ENCODE measurements at regions of chr3 and their contacts with region 1.

Region 1: DNA sequence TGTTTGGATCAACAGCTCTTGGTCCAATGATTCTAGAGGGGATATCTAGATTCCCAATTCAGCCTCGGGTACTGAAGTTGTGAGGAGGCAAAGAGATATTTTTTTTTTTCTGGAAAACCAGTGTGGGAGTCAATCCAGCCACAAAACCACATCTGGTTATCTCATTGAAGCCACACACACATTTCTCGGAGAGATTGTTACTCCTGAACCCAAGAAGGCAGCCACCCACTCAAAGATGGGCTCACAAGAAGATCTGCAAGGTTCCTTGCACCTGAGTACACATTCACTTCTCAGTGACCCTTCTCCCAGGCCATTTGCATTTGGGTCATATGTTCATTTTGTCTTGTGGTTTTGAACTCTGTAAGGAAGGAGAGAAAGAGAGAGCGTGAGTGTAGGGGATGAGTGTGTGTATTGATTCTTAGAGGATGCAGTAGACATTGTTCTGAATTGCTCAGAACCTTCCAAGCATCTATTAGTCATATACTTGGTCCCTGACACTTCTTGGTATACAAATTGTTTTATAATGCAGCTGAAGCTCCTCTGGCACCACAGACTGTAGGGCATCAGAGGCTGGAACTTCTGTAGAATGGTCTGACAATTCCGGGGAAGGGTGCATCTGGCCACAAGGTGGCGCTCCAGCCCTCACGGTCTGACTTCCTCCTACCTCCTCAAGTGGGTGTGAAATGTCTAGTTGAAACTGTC is 39.3 kb upstream of the TRA2B start:
- DNase-seq: peak; percentile 94
- H3K4me3 Mint-ChIP-seq: peak overlapping the region; percentile 44
- H3K27ac Mint-ChIP-seq: peak overlapping the region; percentile 68
- H3K4me1 Mint-ChIP-seq: peaks cover 16% of the 10 kb centered on the region
- H3K27me3 Mint-ChIP-seq: peaks cover 41% of the 10 kb centered on the region

Region 2: DNA sequence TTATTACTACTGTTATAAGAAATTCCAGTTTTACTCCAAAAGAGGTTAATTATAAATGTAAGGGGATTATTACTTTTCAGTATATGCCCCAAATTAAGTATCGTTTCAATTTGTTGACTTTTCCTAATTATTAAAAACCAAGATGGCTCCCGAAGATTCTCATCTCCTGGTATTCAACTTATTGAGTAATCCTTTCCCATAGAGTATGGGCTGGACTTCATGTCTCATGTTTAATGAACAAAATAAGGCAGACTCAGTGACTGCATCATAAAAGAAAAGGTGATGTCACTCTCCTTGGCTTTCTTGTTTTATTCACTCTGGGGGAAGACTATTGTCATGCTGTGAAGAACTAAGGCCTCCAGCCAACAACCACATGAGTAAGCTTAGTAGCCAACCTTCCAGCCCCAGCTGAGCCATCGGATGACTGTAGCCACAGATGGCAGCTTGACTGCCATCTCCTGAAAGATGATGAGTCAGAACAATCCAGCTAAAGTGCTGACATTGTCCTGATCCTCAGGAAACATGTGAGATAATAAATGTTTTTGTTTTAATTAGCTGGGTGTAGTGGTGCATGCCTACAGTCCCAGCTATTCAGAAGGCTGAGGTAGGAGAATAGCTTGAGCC is 169.6 kb before region 1 on chr3:
- intact Hi-C with region 1: no loop called
- DNase-seq: no peak
- H3K4me3 Mint-ChIP-seq: no peak overlapping the region
- H3K27ac Mint-ChIP-seq: no peak overlapping the region
- H3K4me1 Mint-ChIP-seq: no peaks in the 10 kb centered on the region
- H3K27me3 Mint-ChIP-seq: peaks cover 22% of the 10 kb centered on the region

Region 3: GRCh38 chr3:185937689-185938463 is 39.3 kb before region 1 on chr3 and contains the start of gene TRA2B:
- intact Hi-C with region 1: loop called (anchors 1 kb)
- DNase-seq: peak; percentile 100
- H3K4me3 Mint-ChIP-seq: peak within 1 kb of the TSS; percentile 98
- H3K27ac Mint-ChIP-seq: peak within 1 kb of the TSS; percentile 100
- H3K4me1 Mint-ChIP-seq: peaks cover 33% of the 10 kb centered on the region
- H3K27me3 Mint-ChIP-seq: peaks cover 4% of the 10 kb centered on the region
- total RNA-seq, gene TRA2B: 311 and 314 TPM in 2 replicates

Region 4: GRCh38 chr3:186013312-186013711 is 36.2 kb after region 1 on chr3:
- intact Hi-C with region 1: no loop called
- DNase-seq: no peak
- H3K4me3 Mint-ChIP-seq: no peak overlapping the region
- H3K27ac Mint-ChIP-seq: no peak overlapping the region
- H3K4me1 Mint-ChIP-seq: no peaks in the 10 kb centered on the region
- H3K27me3 Mint-ChIP-seq: peaks cover 10% of the 10 kb centered on the region

Region 5: DNA sequence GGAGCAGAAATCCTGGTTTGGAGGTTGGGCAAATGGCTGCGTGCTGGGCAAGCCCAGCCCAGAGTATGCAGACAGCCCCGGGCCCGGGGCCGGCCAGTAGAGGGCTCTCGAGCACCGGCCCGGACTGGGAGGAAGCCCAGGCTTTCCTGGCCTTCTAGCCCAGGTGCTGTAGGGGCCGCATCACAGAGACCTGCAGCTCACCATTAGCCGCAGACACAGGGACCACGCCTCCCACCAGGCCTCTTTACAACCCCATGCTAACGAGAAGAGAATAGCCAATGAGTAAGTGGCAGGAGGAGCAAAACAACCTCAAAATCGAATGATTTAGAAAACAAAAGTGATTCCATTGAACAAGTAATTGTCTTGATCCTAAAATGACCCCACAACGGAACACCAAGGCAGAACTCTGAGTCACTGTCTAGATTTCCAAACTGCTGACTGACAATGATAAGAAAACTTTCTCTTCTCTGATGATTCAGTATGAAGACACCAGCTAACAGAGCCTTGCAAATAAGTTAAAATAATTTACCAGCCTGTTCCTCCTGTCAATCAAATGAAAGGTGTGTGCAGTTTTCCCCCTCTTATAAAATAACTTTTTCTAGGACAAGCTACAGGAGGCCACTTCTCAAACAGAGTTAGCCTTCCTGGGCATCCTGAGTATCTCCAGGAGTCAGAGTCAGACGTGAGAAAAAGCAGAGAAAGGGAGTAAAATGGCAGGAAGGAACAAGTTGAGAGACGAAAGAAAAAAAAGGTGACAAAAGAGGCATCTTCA is 282.7 kb after region 1 on chr3:
- intact Hi-C with region 1: no loop called
- DNase-seq: peak; percentile 86
- H3K4me3 Mint-ChIP-seq: peak overlapping the region; percentile 46
- H3K27ac Mint-ChIP-seq: peak overlapping the region; percentile 76
- H3K4me1 Mint-ChIP-seq: peaks cover 20% of the 10 kb centered on the region
- H3K27me3 Mint-ChIP-seq: peaks cover 5% of the 10 kb centered on the region

Region 6: GRCh38 chr3:186540221-186540834 is 563.2 kb after region 1 on chr3:
- intact Hi-C with region 1: loop called (anchors 1 kb)
- DNase-seq: peak; percentile 95
- H3K4me3 Mint-ChIP-seq: peak overlapping the region; percentile 28
- H3K27ac Mint-ChIP-seq: peak overlapping the region; percentile 21
- H3K4me1 Mint-ChIP-seq: peaks cover 31% of the 10 kb centered on the region
- H3K27me3 Mint-ChIP-seq: no peaks in the 10 kb centered on the region

Region 7: DNA sequence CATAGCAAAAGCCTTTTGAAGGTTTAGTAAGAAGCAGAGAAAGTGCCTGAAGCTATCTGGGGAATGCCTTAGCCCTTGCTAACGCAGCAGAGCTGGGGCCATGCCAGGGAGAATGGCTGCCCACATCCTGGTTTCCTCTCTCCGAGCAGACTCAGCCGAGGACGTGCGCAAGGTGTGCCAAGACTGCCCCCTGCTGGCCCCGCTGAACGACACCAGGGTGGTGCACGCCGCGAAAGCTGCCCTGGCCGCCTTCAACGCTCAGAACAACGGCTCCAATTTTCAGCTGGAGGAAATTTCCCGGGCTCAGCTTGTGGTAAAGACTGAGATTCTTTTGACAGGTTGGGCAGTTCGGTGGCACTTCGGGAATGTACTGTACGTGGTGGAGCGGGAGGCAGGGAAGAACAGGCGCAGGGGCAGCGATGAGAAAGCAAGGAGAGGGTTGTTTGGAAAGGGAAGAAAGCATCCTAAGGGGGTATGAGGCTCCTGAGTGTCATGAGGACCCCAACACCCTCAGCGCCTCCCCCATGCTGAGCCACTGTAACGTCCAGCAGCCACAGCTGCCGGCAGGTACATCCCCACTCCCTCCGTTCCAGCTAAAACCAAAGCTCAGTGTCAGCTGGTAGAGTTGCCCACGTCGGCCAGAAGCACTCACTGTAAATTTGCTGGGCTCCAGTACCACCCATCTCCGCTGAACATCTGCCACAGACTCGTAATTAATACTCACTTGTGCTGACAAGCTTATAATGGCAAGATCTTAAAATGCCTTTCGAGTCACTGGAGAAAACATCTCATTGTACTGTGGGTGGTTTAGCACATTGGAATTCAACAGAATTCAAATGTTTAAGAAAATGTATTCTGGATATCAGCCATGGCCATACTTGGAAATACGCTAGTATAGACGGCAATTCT is 640.2 kb after region 1 on chr3:
- intact Hi-C with region 1: loop called (anchors 2 kb)
- DNase-seq: peak; percentile 94
- H3K4me3 Mint-ChIP-seq: peak overlapping the region; percentile 74
- H3K27ac Mint-ChIP-seq: peak overlapping the region; percentile 68
- H3K4me1 Mint-ChIP-seq: peaks cover 21% of the 10 kb centered on the region
- H3K27me3 Mint-ChIP-seq: peaks cover 30% of the 10 kb centered on the region

Region 8: GRCh38 chr3:186806089-186807055 is 829.2 kb after region 1 on chr3 and contains the start of gene RFC4:
- intact Hi-C with region 1: loop called (anchors 10 kb)
- DNase-seq: peak; percentile 96
- H3K4me3 Mint-ChIP-seq: peak within 1 kb of the TSS; percentile 93
- H3K27ac Mint-ChIP-seq: peak within 1 kb of the TSS; percentile 91
- H3K4me1 Mint-ChIP-seq: peaks cover 24% of the 10 kb centered on the region
- H3K27me3 Mint-ChIP-seq: no peaks in the 10 kb centered on the region
- total RNA-seq, gene RFC4: 116 and 119 TPM in 2 replicates

Measured in activated CD4-positive, alpha-beta T cell treated with anti-CD3 and anti-CD28 coated beads, Interleukin-2, amount 10 ng/mL, durations not matched to agents 24 days and 14 days (primary cell).